Esophagus squamous epithelium (tissue), 5 donors: ENCODE measurements at regions of chr5 and their contacts with region 1.

Region 1: DNA sequence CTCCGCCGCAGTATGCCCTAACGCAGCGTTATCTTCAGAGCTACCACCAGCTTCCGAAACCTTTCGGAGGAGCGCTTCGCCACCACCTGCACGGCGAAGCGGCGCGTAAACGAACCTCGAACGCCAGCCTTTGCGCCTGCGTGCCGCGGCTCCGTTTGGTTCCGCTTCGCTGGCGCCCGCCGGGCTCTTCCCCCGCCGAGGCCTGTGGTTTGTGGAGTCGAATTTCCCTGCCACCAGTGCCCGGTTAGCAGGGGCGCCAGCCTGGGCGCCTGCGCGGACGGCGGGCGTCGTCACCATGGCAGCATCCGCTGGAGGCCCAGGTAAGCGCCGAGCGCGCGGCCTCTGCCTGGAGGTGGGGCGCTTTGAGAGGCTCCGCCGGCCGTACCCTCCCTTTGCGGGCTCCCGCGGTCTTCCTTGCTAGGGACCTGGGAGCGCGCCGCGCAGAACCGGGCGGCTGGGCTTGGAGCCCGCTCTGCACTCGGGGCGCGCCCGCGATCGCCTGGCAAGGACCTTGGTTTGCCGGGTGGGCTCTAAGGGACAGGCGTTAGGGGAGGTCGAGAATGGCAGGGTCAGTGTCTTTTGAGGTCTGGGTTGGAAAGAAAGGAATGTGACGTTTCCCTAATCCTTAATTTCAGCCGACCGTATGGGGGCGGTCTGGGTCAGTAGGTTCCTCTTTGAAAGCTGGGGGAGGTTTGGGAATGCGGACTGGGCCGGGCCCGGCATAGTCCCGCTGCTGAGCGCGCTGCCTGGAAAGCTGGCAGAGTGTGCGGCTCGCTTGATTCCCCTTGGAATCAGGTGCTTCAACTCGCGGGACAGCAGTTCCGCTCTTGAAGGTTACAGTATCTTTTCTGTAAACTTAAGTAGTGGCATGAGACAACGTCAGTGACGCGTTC is at the start of gene FAM151B:
- DNase-seq: peak; percentile 9
- H3K4me3 ChIP-seq: peak within 1 kb of the TSS; percentile 57 to 72 (median 67)
- H3K27ac ChIP-seq: peak within 1 kb of the TSS; percentile 78 to 86 (median 86)
- H3K4me1 ChIP-seq: peaks cover 2 to 31% (median 9%) of the 10 kb centered on the region in 3 donors
- H3K27me3 ChIP-seq: no peaks in the 10 kb centered on the region
- CTCF ChIP-seq: peak in 1 of 6 experiments; percentile 2
- POLR2A ChIP-seq: peak in 1 of 4 donors; percentile 47
- total RNA-seq, gene FAM151B: 0.38 to 3.6 (median 0.84) TPM

Region 2: DNA sequence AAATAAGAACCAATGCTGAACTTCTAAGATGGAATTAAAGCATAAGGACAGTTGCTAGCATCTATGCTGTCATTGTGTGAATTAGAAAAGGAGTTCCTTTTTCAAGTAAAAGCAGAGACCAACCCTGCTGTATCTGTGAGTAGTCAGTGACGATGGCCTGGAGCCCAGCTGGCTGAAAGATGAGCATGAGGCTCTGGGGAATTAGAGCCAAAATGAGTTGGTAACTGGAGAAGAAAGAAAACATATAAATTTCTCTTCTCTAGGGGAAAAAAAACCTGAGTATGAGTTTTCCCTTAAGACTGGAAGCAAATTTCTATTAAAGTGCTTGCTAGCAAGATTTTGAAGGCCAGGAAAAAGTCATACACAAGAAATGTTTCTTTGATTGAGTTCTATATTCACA is 169.9 kb before region 1 on chr5:
- intact Hi-C with region 1: no loop called
- DNase-seq: no peak
- H3K4me3 ChIP-seq: no peak overlapping the region
- H3K27ac ChIP-seq: no peak overlapping the region
- H3K4me1 ChIP-seq: no peaks in the 10 kb centered on the region
- H3K27me3 ChIP-seq: no peaks in the 10 kb centered on the region
- CTCF ChIP-seq: no peak
- POLR2A ChIP-seq: no peak

Region 3: DNA sequence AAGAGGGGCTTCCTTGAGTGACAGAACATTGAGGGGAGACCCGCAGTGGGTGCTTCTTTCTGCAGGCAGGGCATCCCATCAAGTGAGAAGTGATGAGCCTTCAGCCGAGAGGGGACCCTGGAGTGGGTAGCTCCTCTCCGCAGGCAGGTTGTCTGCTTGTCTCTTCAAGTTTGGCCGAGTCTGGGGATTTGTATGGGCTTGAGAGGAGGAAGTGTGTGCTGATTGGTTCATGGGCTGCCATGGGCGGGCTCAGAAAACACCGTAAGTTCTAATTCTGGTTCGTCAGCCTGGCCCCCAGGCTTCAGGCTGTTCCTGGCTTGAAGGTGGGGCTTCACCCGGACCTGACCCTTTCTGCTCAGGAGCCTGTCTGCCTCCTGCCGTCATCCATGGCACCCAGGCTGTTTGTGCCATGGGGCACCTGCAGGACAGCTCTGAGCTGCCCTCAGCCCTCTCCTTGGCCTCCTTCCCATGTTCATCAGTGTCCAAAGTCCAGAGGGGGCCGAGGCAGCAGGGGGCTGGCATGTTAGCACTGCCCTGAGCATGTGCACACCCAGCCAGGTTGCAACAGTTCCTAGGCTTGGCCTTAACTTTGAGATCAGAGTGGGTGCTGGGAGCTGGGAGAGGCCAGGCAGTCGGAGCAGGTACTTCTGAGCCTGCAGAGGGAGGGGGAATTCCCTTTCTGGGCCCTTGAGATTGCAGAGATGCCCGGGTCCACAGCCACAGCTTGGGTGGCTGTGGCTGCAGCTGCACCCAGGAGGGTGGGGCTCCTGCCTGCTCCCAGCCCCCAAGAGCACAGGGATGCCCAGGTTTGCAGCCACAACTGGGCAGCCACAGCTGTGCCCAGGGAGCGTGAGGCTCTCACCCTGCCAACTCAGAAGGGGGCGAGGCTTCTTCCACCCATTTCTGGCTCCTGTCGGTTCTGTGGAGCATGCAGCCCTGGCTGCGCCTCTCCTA is 180.2 kb after region 1 on chr5:
- intact Hi-C with region 1: loop called (anchors 10 kb)
- DNase-seq: no peak
- H3K4me3 ChIP-seq: no peak overlapping the region
- H3K27ac ChIP-seq: peak overlapping the region in 2 of 4 donors; percentile 30 to 36
- H3K4me1 ChIP-seq: no peaks in the 10 kb centered on the region
- H3K27me3 ChIP-seq: no peaks in the 10 kb centered on the region
- CTCF ChIP-seq: no peak
- POLR2A ChIP-seq: no peak

Region 4: DNA sequence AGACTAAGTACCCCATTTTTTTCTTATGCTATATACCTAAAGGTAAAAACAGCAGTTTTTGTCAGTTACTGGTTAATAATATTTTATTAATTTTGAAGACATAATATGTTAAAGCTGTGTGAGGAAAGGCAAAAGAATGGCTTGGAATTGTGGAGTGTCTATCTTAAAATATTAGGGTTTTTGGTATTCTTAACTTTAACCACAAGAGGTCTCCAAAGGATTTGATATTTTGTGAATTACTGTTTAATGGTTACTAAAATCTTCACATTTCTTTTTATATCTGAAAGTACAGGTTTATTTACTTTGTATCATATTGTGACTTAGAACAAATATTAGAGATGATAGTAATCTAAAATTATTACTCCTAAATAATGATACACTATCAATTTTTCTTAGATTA is 198.7 kb after region 1 on chr5:
- intact Hi-C with region 1: no loop called
- DNase-seq: no peak
- H3K4me3 ChIP-seq: no peak overlapping the region
- H3K27ac ChIP-seq: no peak overlapping the region
- H3K4me1 ChIP-seq: no peaks in the 10 kb centered on the region
- H3K27me3 ChIP-seq: no peaks in the 10 kb centered on the region
- CTCF ChIP-seq: peak in 3 of 6 experiments; percentile 18 to 41 (median 22)
- POLR2A ChIP-seq: no peak